ENCODE measurements at regions of chr2 and their contacts with region 1.

Region 1: GRCh38 chr2:88669371-88670214 is 21.9 kb upstream of the RPIA start:
- DNase-seq: peak; percentile 32
- ATAC-seq: peak; percentile 93
- H3K4me3 ChIP-seq: no peak overlapping the region
- H3K27ac ChIP-seq: no peak overlapping the region
- H3K4me1 ChIP-seq: no peaks in the 10 kb centered on the region
- H3K27me3 ChIP-seq: no peaks in the 10 kb centered on the region
- CTCF ChIP-seq: peak; percentile 64 to 80 (median 74); a peak in 5 of 6 replicates
- EP300 ChIP-seq: no peak
- POLR2A ChIP-seq: no peak
- RAD21 ChIP-seq: peak; percentile 94

Region 2: GRCh38 chr2:88451811-88452565 is 217.6 kb before region 1 on chr2:
- CTCF ChIA-PET with region 1: no interaction called
- POLR2A ChIA-PET with region 1: no interaction called
- RAD21 ChIA-PET with region 1: interaction called, 3 read pairs
- SMC1A ChIA-PET with region 1: no interaction called
- in situ Hi-C with region 1: no loop called
- intact Hi-C with region 1: loop called (anchors 10 kb)
- DNase-seq: no peak
- ATAC-seq: no peak
- H3K4me3 ChIP-seq: no peak overlapping the region
- H3K27ac ChIP-seq: no peak overlapping the region
- H3K4me1 ChIP-seq: no peaks in the 10 kb centered on the region
- H3K27me3 ChIP-seq: peaks cover 4 to 12% of the 10 kb centered on the region in 2 experiments
- CTCF ChIP-seq: no peak
- EP300 ChIP-seq: no peak
- POLR2A ChIP-seq: no peak
- RAD21 ChIP-seq: no peak

Region 3: DNA sequence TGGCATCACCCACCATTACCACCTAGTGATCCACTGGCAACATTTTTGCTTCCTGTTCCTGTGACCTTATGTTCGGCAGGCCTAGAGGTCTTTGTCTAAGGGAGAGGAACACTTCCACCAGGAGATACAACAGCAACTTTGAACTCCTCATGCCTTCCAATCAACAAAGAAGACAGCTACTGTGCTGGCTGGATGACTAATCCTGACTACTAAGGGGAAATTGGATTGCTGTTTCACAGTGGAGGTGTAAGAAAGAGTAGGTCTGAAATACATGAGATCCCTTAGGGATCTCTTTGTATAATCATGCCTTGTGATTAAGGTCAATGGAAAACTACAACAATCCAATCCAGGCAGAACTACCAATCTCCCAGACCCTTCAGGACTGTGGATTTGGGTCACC is 87.6 kb before region 1 on chr2:
- CTCF ChIA-PET with region 1: interaction called, 399 read pairs
- POLR2A ChIA-PET with region 1: no interaction called
- RAD21 ChIA-PET with region 1: interaction called, 6 read pairs
- SMC1A ChIA-PET with region 1: interaction called, 270 read pairs
- in situ Hi-C with region 1: no loop called
- intact Hi-C with region 1: no loop called
- DNase-seq: no peak
- ATAC-seq: no peak
- H3K4me3 ChIP-seq: no peak overlapping the region
- H3K27ac ChIP-seq: no peak overlapping the region
- H3K4me1 ChIP-seq: no peaks in the 10 kb centered on the region
- H3K27me3 ChIP-seq: no peaks in the 10 kb centered on the region
- CTCF ChIP-seq: no peak
- EP300 ChIP-seq: no peak
- POLR2A ChIP-seq: no peak
- RAD21 ChIP-seq: no peak

Region 4: DNA sequence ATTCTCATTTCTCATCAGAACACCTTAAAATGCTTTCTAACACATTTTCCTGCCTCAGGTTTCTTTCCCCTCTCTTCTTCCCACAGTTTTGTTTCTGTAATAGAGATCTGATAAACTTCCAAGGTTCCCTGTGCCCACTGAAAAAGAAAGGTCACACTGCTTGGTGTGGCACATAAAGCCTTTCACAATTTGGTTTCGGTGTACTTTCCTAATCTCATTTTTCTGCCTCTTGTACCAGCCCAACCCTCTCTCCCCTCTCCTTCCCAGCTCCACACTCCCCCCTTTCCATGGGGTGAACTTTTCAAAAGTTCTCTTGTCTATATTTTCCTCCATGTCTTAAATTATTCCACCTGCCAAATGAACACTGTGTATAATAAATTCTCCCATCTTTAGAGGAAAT is 49.6 kb before region 1 on chr2:
- CTCF ChIA-PET with region 1: interaction called, 45 read pairs
- POLR2A ChIA-PET with region 1: interaction called, 4 read pairs
- RAD21 ChIA-PET with region 1: interaction called, 8 read pairs
- SMC1A ChIA-PET with region 1: interaction called, 6 read pairs
- in situ Hi-C with region 1: no loop called
- intact Hi-C with region 1: loop called (anchors 5 kb)
- DNase-seq: no peak
- ATAC-seq: no peak
- H3K4me3 ChIP-seq: no peak overlapping the region
- H3K27ac ChIP-seq: no peak overlapping the region
- H3K4me1 ChIP-seq: peaks cover 32% of the 10 kb centered on the region
- H3K27me3 ChIP-seq: no peaks in the 10 kb centered on the region
- CTCF ChIP-seq: no peak
- EP300 ChIP-seq: no peak
- POLR2A ChIP-seq: no peak
- RAD21 ChIP-seq: no peak

Region 5: DNA sequence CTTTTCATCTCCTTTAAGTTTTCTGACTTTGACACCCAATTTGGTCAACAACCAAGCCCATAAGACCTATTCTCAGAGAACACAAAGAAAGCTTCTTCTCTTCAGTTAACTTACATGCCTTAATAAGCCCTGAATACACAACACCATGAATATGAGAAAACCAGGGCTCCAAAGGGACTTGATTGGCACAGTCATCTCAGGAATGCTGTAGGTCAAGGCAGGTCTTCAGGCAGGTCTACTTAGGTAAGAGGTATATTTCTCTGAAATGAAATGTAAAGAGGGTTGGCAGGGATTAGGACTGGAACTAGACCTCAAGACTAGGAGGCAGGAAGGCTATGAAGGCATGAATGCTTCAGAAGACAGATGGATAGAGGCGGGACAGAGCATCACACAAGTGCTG is 17.9 kb before region 1 on chr2:
- CTCF ChIA-PET with region 1: interaction called, 37 read pairs
- POLR2A ChIA-PET with region 1: no interaction called
- RAD21 ChIA-PET with region 1: interaction called, 7 read pairs
- SMC1A ChIA-PET with region 1: interaction called, 8 read pairs
- in situ Hi-C with region 1: no loop called
- intact Hi-C with region 1: no loop called
- DNase-seq: no peak
- ATAC-seq: no peak
- H3K4me3 ChIP-seq: no peak overlapping the region
- H3K27ac ChIP-seq: no peak overlapping the region
- H3K4me1 ChIP-seq: no peaks in the 10 kb centered on the region
- H3K27me3 ChIP-seq: no peaks in the 10 kb centered on the region
- CTCF ChIP-seq: no peak
- EP300 ChIP-seq: no peak
- POLR2A ChIP-seq: no peak
- RAD21 ChIP-seq: no peak

Region 6: DNA sequence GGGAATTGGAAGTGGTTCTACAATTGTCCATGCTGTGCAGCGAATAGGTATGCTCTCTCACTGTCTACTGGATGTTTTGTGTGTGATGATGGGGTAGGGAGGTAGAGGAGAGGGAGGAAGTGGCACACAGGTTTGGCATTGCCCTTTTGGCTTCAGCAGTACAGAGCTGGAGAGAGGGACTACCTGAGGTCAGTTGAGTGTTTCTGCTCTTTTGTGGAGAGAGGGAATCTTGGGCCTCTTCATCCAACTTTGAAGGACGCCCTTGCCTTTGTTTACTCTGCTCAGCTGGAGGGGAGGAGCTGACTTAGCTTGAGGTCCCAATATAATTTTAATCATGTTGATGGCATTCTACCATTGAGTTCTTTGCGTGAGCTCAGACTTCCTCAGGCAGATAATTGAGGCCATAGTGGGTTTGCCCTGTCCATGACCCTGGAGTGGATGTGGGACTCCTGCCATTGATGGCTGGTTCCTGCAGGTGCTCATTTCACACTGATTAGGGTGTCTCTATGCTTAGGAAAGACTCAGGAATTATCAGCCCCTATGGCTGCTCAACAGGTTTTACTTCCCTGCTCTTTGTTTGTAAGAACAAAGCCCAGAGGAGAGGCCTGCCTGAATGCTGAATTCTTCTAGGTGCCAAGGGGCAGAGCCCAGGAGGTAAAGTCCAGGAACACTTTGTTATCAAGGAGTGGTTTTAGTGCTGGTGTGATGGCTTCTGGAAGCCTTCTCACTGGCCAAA is 29.1 kb after region 1 on chr2:
- CTCF ChIA-PET with region 1: interaction called, 13 read pairs
- POLR2A ChIA-PET with region 1: no interaction called
- RAD21 ChIA-PET with region 1: interaction called, 8 read pairs
- SMC1A ChIA-PET with region 1: interaction called, 4 read pairs
- in situ Hi-C with region 1: no loop called
- intact Hi-C with region 1: no loop called
- DNase-seq: no peak
- ATAC-seq: no peak
- H3K4me3 ChIP-seq: no peak overlapping the region
- H3K27ac ChIP-seq: no peak overlapping the region
- H3K4me1 ChIP-seq: no peaks in the 10 kb centered on the region; the same call in 1 of the 2 replicates
- H3K27me3 ChIP-seq: no peaks in the 10 kb centered on the region
- CTCF ChIP-seq: no peak
- EP300 ChIP-seq: no peak
- POLR2A ChIP-seq: no peak
- RAD21 ChIP-seq: no peak

Measured in GM12878 (cell line).